ENCODE measurements at regions of chr14 and their contacts with region 1.

Region 1: GRCh38 chr14:22472935-22473854 is 115.8 kb downstream of the DAD1 start:
- DNase-seq: peak; percentile 56
- H3K4me3 Mint-ChIP-seq: no peak overlapping the region
- H3K27ac Mint-ChIP-seq: no peak overlapping the region
- H3K4me1 Mint-ChIP-seq: peaks cover 17% of the 10 kb centered on the region
- H3K27me3 Mint-ChIP-seq: no peaks in the 10 kb centered on the region
- CTCF ChIP-seq: peak; percentile 60

Region 2: GRCh38 chr14:22314181-22314820 is 158.9 kb before region 1 on chr14:
- CTCF ChIA-PET with region 1: interaction called, 24 read pairs
- POLR2A ChIA-PET with region 1: no interaction called
- intact Hi-C with region 1: loop called (anchors 2 kb)
- DNase-seq: peak; percentile 70
- H3K4me3 Mint-ChIP-seq: no peak overlapping the region
- H3K27ac Mint-ChIP-seq: no peak overlapping the region
- H3K4me1 Mint-ChIP-seq: peaks cover 6% of the 10 kb centered on the region
- H3K27me3 Mint-ChIP-seq: no peaks in the 10 kb centered on the region
- CTCF ChIP-seq: peak; percentile 67

Region 3: DNA sequence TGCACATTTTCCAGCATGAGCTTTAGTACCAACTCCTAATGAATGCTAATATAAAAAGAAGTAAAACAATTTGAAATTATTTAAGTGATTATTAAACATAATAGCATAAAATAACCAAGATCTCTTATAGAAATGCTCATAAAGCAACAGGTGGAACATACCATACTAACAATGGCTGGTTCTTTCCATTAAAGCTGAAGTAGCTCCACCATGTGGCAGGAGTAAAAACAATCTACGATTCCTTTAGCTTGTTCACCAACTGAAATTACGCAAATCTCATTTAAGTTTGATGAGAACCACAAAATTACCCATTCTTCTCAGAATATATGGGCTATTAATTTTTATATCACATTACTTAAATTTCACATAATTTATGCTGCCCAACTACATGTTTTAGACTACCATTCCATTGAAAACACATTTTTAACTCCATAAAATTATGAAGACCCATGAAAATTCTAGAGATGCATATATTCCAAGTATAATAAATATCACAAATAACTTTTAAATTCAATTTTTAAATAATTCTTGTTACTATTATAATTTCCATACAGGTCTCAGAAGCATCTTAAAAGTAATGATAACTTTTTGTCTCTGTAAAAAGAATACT is 97.8 kb before region 1 on chr14:
- CTCF ChIA-PET with region 1: interaction called, 80 read pairs
- POLR2A ChIA-PET with region 1: no interaction called
- intact Hi-C with region 1: no loop called
- DNase-seq: peak; percentile 63
- H3K4me3 Mint-ChIP-seq: no peak overlapping the region
- H3K27ac Mint-ChIP-seq: no peak overlapping the region
- H3K4me1 Mint-ChIP-seq: peaks cover 9% of the 10 kb centered on the region
- H3K27me3 Mint-ChIP-seq: peaks cover 20% of the 10 kb centered on the region
- CTCF ChIP-seq: peak; percentile 69

Region 4: DNA sequence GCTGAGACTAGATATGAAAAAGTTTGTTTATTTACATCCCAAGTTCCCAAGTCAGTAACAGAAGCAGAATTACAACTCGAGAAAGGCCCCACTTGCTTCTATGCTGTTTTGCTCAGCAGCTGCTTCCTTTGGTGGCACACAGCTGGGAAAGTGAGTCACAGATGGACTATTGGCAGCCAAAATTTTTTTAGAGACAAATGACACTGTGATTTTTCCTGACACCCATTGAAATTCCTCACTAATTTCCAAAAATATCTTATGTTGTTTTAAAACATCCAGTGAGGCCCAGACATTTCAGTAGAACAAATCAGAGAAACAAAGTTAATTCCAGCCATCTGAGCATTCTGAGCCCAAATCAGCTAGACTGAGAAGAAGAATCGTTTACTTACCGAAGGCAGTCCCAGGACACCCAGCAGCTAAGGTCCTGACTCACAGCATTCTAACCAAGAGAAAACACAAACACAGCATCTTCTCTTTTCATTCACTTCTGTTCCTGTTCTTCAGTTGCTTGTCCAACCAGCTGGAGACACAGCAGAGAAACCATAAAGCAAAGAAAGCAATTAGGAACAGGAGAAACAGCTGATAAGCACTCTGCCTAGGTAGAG is 72.4 kb before region 1 on chr14:
- CTCF ChIA-PET with region 1: interaction called, 15 read pairs
- POLR2A ChIA-PET with region 1: no interaction called
- intact Hi-C with region 1: no loop called
- DNase-seq: no peak
- H3K4me3 Mint-ChIP-seq: no peak overlapping the region
- H3K27ac Mint-ChIP-seq: no peak overlapping the region
- H3K4me1 Mint-ChIP-seq: no peaks in the 10 kb centered on the region
- H3K27me3 Mint-ChIP-seq: peaks cover 55% of the 10 kb centered on the region
- CTCF ChIP-seq: no peak

Region 5: GRCh38 chr14:22432348-22432976 is 40.7 kb before region 1 on chr14:
- CTCF ChIA-PET with region 1: interaction called, 13 read pairs
- POLR2A ChIA-PET with region 1: interaction called, 3 read pairs
- intact Hi-C with region 1: loop called (anchors 5 kb)
- DNase-seq: peak; percentile 97
- H3K4me3 Mint-ChIP-seq: peak overlapping the region; percentile 25
- H3K27ac Mint-ChIP-seq: no peak overlapping the region
- H3K4me1 Mint-ChIP-seq: peaks cover 29% of the 10 kb centered on the region
- H3K27me3 Mint-ChIP-seq: no peaks in the 10 kb centered on the region
- CTCF ChIP-seq: no peak

Region 6: GRCh38 chr14:22448035-22448904 is 24.9 kb before region 1 on chr14:
- CTCF ChIA-PET with region 1: interaction called, 11 read pairs
- POLR2A ChIA-PET with region 1: no interaction called
- intact Hi-C with region 1: no loop called
- DNase-seq: no peak
- H3K4me3 Mint-ChIP-seq: no peak overlapping the region
- H3K27ac Mint-ChIP-seq: no peak overlapping the region
- H3K4me1 Mint-ChIP-seq: no peaks in the 10 kb centered on the region
- H3K27me3 Mint-ChIP-seq: peaks cover 9% of the 10 kb centered on the region
- CTCF ChIP-seq: no peak

Region 7: GRCh38 chr14:23320774-23321571 is 847.8 kb after region 1 on chr14 and contains the start of gene PABPN1:
- CTCF ChIA-PET with region 1: no interaction called
- POLR2A ChIA-PET with region 1: no interaction called
- intact Hi-C with region 1: no loop called
- DNase-seq: peak; percentile 100
- H3K4me3 Mint-ChIP-seq: peak within 1 kb of the TSS; percentile 84
- H3K27ac Mint-ChIP-seq: peak within 1 kb of the TSS; percentile 97
- H3K4me1 Mint-ChIP-seq: peaks cover 11% of the 10 kb centered on the region
- H3K27me3 Mint-ChIP-seq: no peaks in the 10 kb centered on the region
- CTCF ChIP-seq: no peak
- total RNA-seq, gene PABPN1: 153 and 167 TPM in 2 replicates